ENCODE measurements at regions of chr4 and their contacts with region 1.

Region 1: GRCh38 chr4:183618681-183619080 is 40.3 kb downstream of the RWDD4 start:
- DNase-seq: peak; percentile 88
- ATAC-seq: peak; percentile 94
- H3K4me3 ChIP-seq: peak overlapping the region; percentile 48 to 69 (median 60)
- H3K27ac ChIP-seq: peak overlapping the region; percentile 61
- H3K4me1 ChIP-seq: peaks cover 45% of the 10 kb centered on the region
- H3K27me3 ChIP-seq: no peaks in the 10 kb centered on the region
- CTCF ChIP-seq: no peak
- EP300 ChIP-seq: peak in 1 of 2 experiments; percentile 77; a peak in 2 of 4 replicates
- POLR2A ChIP-seq: peak in 1 of 2 experiments; percentile 40; a peak in 1 of 4 replicates
- RAD21 ChIP-seq: no peak

Region 2: GRCh38 chr4:183053681-183054080 is 565.0 kb before region 1 on chr4:
- CTCF ChIA-PET with region 1: no interaction called
- POLR2A ChIA-PET with region 1: no interaction called
- in situ Hi-C with region 1: no loop called
- intact Hi-C with region 1: no loop called
- DNase-seq: no peak
- ATAC-seq: no peak
- H3K4me3 ChIP-seq: no peak overlapping the region
- H3K27ac ChIP-seq: no peak overlapping the region
- H3K4me1 ChIP-seq: no peaks in the 10 kb centered on the region
- H3K27me3 ChIP-seq: peaks cover 0 to 9% of the 10 kb centered on the region in 2 experiments; a peak in 2 of 5 replicates
- CTCF ChIP-seq: no peak
- EP300 ChIP-seq: no peak
- POLR2A ChIP-seq: no peak
- RAD21 ChIP-seq: no peak

Region 3: DNA sequence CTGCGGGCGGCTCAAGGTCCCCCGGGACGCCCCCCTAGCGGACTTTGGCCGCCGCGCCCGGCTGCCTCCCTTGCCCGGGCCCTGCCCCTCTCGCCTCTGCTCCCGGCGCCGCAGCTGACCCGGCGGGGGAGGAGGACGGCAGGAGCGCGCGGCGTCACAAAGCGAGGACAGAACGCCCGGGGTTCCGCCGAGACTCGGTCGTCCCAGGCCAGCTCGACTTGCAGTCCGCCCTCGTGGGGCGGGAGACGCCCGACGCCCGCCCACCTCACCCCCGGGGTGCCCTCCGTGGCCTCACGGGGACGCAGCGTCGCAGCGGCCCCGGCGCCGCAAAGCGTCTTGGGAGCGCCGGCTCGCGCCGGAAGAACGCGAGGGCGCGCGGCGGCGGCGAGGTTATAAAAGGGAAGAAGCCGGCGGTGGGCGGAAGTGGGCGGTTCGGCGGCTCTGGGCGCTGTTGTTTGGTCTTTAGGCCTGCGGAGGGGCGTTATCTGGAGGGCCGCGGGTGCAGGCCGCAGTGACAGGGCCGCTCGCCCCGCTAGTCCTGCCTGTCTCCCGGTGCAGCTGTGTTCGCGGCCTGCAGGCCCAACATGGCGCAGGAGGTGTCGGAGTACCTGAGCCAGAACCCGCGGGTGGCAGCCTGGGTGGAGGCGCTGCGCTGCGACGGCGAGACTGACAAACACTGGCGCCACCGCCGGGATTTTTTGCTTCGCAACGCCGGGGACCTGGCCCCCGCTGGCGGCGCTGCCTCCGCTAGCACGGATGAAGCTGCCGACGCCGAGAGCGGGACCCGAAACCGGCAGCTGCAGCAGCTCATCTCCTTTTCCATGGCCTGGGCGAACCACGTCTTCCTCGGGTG is 174.2 kb before region 1 on chr4 and contains the start of gene CDKN2AIP:
- CTCF ChIA-PET with region 1: no interaction called
- POLR2A ChIA-PET with region 1: interaction called, 17 read pairs
- in situ Hi-C with region 1: no loop called
- intact Hi-C with region 1: no loop called
- DNase-seq: peak; percentile 87
- ATAC-seq: peak; percentile 91
- H3K4me3 ChIP-seq: peak within 1 kb of the TSS; percentile 86 to 99 (median 91)
- H3K27ac ChIP-seq: peak within 1 kb of the TSS; percentile 100
- H3K4me1 ChIP-seq: peaks cover 49% of the 10 kb centered on the region
- H3K27me3 ChIP-seq: no peaks in the 10 kb centered on the region; a peak in 1 of 5 replicates
- CTCF ChIP-seq: peak; percentile 34
- EP300 ChIP-seq: peak in 1 of 2 experiments; percentile 71; a peak in 2 of 4 replicates
- POLR2A ChIP-seq: peak; percentile 81 to 89
- RAD21 ChIP-seq: no peak; the same call in none of the 2 replicates
- total RNA-seq, gene CDKN2AIP: 18.7 and 21.4 TPM in 2 replicates

Region 4: GRCh38 chr4:183471946-183472708 is 146.6 kb before region 1 on chr4:
- CTCF ChIA-PET with region 1: no interaction called
- POLR2A ChIA-PET with region 1: no interaction called
- in situ Hi-C with region 1: no loop called
- intact Hi-C with region 1: loop called (anchors 1 kb)
- DNase-seq: peak; percentile 50
- ATAC-seq: peak; percentile 89
- H3K4me3 ChIP-seq: no peak overlapping the region
- H3K27ac ChIP-seq: no peak overlapping the region
- H3K4me1 ChIP-seq: peaks cover 24% of the 10 kb centered on the region
- H3K27me3 ChIP-seq: no peaks in the 10 kb centered on the region
- CTCF ChIP-seq: peak; percentile 84
- EP300 ChIP-seq: no peak
- POLR2A ChIP-seq: no peak
- RAD21 ChIP-seq: peak; percentile 75

Region 5: GRCh38 chr4:183504064-183504929 is 114.4 kb before region 1 on chr4:
- CTCF ChIA-PET with region 1: no interaction called
- POLR2A ChIA-PET with region 1: interaction called, 3 read pairs
- in situ Hi-C with region 1: no loop called
- intact Hi-C with region 1: loop called (anchors 2 kb)
- DNase-seq: peak; percentile 93
- ATAC-seq: peak; percentile 82
- H3K4me3 ChIP-seq: peak overlapping the region; percentile 84 to 99 (median 97)
- H3K27ac ChIP-seq: peak overlapping the region; percentile 91
- H3K4me1 ChIP-seq: peaks cover 49% of the 10 kb centered on the region
- H3K27me3 ChIP-seq: no peaks in the 10 kb centered on the region; a peak in 1 of 5 replicates
- CTCF ChIP-seq: peak; percentile 53
- EP300 ChIP-seq: peak; percentile 10 to 12; a peak in 1 of 4 replicates
- POLR2A ChIP-seq: peak; percentile 65 to 77
- RAD21 ChIP-seq: peak; percentile 86

Region 6: GRCh38 chr4:183602557-183603027 is 16.1 kb before region 1 on chr4:
- CTCF ChIA-PET with region 1: no interaction called
- POLR2A ChIA-PET with region 1: interaction called, 4 read pairs
- in situ Hi-C with region 1: no loop called
- intact Hi-C with region 1: loop called (anchors 1 kb)
- DNase-seq: no peak
- ATAC-seq: no peak
- H3K4me3 ChIP-seq: no peak overlapping the region
- H3K27ac ChIP-seq: no peak overlapping the region
- H3K4me1 ChIP-seq: peaks cover 13% of the 10 kb centered on the region
- H3K27me3 ChIP-seq: peaks cover 0 to 1% of the 10 kb centered on the region in 2 experiments; a peak in 1 of 5 replicates
- CTCF ChIP-seq: peak; percentile 45
- EP300 ChIP-seq: no peak
- POLR2A ChIP-seq: no peak
- RAD21 ChIP-seq: no peak

Region 7: GRCh38 chr4:183659029-183659871 is 40.6 kb after region 1 on chr4 and contains the starts of genes RWDD4 and TRAPPC11:
- CTCF ChIA-PET with region 1: no interaction called
- POLR2A ChIA-PET with region 1: no interaction called
- in situ Hi-C with region 1: no loop called
- intact Hi-C with region 1: loop called (anchors 2 kb)
- DNase-seq: peak; percentile 94
- ATAC-seq: peak; percentile 99
- H3K4me3 ChIP-seq: peak within 1 kb of the TSS; percentile 77 to 85 (median 82)
- H3K27ac ChIP-seq: peak within 1 kb of the TSS; percentile 70
- H3K4me1 ChIP-seq: peaks cover 35% of the 10 kb centered on the region
- H3K27me3 ChIP-seq: no peaks in the 10 kb centered on the region; a peak in 1 of 5 replicates
- CTCF ChIP-seq: 0 out of 2 replicates have a peak, but pooled peaks have one; percentile 35
- EP300 ChIP-seq: no peak
- POLR2A ChIP-seq: peak; percentile 43 to 72; a peak in 3 of 4 replicates
- RAD21 ChIP-seq: peak; percentile 67
- total RNA-seq, gene RWDD4: 25.4 and 28.9 TPM in 2 replicates
- total RNA-seq, gene TRAPPC11: 18.0 and 22.7 TPM in 2 replicates

Region 8: DNA sequence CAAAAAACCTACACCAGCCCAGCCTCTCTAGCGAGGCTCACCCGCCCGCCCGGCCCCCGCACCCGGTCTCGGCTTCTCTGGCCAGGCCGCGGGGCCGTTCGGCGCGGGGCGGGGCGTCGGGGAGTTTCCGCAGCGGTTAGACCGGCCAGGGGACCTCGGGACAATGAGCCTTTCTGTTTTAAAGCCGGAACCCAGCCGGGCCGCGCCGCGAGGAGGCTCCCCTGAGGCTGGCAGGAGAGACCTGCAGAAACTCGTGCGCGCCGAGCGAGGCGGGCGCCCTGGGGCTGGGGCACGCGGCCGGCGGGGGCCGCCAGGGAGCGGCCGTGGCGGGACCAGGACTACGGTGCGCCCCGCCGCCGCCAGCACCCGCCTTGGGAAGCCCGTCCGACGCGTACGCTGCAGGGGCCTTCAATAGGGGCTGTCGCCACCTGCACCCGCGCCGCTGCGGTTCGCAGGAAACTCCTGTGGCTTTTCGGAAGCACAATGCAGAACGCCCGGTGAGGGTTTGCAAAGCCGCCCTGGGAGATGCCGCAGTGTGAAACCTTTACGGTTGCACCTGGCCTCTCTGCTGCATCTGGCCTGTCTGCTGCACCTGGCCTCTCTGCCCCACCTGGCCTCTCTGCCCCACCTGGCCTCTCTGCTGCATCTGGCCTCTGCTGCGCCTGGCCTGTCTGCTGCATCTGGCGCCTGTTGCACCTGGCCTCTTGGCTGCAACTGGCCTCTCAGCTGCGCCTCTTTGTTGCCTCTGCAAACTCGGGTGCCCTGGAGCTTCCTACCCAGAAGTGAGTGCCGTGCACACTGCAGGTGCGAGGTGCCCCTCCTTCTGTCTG is 104.3 kb after region 1 on chr4:
- CTCF ChIA-PET with region 1: no interaction called
- POLR2A ChIA-PET with region 1: interaction called, 3 read pairs
- in situ Hi-C with region 1: no loop called
- intact Hi-C with region 1: loop called (anchors 5 kb)
- DNase-seq: no peak
- ATAC-seq: peak; percentile 43
- H3K4me3 ChIP-seq: peak overlapping the region in 1 of 3 experiments; percentile 58; a peak in 2 of 6 replicates
- H3K27ac ChIP-seq: peak overlapping the region; percentile 70
- H3K4me1 ChIP-seq: peaks cover 56% of the 10 kb centered on the region
- H3K27me3 ChIP-seq: no peaks in the 10 kb centered on the region
- CTCF ChIP-seq: no peak
- EP300 ChIP-seq: no peak
- POLR2A ChIP-seq: no peak
- RAD21 ChIP-seq: no peak